ENCODE measurements at regions of chr5 and their contacts with region 1.

Region 1: DNA sequence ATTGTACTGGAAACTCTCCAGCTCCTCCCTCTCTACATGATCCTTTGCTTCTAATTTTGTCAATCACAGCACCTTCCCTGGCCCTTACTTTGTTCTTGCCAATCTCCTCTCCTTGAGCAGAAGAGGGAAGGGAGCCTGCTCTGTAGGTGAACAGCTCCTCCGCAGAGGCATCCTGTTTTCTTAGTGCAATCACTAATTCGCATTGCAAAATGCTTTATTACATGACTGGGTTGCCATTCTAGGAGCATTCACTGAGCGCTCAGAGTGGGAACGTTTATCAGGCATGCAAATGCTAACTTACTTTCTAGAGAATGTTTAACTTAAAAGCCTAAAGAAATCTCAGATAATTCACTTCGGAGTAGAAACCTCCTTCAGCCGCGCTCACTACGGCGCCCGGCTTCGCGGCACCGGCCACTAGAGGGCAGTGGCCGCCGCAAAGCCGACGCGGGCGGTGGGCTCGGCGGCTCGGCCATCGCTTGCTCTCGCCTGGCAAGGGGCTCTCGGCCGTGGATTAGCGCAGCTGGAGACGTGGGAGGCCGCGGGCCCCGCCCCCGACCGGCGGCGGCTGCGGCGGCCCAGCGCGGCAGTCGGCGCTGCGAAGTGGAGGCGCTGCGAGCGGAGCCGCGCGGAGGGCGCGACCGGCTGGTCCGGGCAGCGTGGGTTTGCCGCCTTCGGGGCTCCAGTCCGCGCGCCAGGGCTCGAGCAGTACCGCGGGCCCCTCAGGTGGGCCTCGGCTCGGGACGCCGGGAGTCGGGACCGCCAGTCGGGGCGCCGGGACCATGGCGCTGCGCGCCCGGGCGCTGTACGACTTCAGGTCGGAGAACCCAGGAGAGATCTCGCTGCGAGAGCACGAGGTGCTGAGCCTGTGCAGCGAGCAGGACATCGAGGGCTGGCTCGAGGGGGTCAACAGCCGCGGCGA is at the start of gene SNX18:
- DNase-seq: peak; percentile 37
- H3K4me3 ChIP-seq: peak within 1 kb of the TSS; percentile 65
- H3K27me3 ChIP-seq: no peaks in the 10 kb centered on the region
- CTCF ChIP-seq: peak; percentile 75
- polyA plus RNA-seq, gene SNX18: 33.3 and 47.0 TPM in 2 replicates

Region 2: DNA sequence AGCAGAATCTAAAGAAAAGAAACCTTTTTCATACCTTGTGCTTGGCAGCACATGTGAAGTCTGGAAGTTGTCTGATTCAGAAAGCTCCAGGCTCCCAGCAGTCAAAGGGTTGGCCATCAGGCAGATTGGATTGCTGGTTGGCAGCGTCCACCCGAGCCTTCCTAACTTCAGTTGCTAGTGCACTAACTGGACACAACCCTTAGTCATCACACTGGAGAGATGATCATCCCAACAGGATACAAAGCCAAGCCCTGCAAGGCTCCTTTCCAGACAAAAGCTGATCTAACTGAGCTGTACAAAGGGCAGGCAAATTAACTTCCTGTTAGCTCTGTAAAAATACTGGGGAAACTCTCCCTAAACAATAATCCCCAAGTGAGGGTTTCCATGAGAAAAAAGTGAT is 185.7 kb after region 1 on chr5:
- CTCF ChIA-PET with region 1: interaction called, 11 read pairs
- POLR2A ChIA-PET with region 1: no interaction called
- DNase-seq: peak; percentile 55
- H3K4me3 ChIP-seq: no peak overlapping the region
- H3K27me3 ChIP-seq: no peaks in the 10 kb centered on the region
- CTCF ChIP-seq: no peak

Region 3: DNA sequence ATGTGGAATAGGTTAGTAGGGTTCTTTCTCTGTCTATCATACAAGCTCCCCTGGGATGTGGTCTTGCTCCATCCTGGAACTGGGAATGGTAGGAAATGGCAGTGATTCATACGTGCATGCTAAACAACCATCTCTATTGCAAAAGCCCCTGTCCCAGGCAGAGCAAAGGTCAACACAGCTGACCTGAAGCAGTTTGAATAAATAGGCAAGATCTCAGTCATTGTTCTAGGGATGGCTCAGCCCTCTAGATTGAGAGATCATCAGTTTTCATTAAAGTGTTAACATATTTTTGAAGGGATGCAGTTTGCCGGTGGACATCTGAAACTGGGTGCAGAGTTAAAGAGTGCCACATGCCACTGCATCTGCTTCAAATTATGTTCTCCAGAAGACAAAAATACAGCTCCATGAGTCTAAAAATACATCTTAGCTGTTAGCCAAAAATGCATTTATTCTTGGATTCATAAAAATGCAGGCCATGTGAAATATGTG is 243.8 kb after region 1 on chr5:
- CTCF ChIA-PET with region 1: interaction called, 18 read pairs
- POLR2A ChIA-PET with region 1: no interaction called
- DNase-seq: peak; percentile 93
- H3K4me3 ChIP-seq: no peak overlapping the region
- H3K27me3 ChIP-seq: no peaks in the 10 kb centered on the region
- CTCF ChIP-seq: no peak

Region 4: DNA sequence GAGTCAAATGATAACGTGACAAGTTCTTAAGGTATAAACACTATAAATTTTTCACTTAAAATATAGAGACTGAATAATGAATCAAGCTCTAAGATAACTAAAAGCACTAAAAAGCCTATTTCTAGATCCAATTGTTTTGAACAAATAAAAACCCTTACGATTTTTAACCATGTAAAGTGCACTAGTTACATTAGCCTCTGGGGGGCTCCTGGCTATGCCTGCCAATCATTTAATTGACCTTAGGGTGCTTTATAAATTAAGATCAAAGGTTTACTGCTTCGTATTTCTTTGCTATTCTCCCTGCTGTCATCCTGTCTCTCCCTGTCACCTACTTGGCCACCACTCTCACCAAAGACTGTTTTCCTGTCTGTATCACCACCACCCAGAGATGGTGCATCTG is 334.6 kb after region 1 on chr5:
- CTCF ChIA-PET with region 1: interaction called, 30 read pairs
- POLR2A ChIA-PET with region 1: no interaction called
- DNase-seq: no peak
- H3K4me3 ChIP-seq: no peak overlapping the region
- H3K27me3 ChIP-seq: no peaks in the 10 kb centered on the region
- CTCF ChIP-seq: no peak

Region 5: DNA sequence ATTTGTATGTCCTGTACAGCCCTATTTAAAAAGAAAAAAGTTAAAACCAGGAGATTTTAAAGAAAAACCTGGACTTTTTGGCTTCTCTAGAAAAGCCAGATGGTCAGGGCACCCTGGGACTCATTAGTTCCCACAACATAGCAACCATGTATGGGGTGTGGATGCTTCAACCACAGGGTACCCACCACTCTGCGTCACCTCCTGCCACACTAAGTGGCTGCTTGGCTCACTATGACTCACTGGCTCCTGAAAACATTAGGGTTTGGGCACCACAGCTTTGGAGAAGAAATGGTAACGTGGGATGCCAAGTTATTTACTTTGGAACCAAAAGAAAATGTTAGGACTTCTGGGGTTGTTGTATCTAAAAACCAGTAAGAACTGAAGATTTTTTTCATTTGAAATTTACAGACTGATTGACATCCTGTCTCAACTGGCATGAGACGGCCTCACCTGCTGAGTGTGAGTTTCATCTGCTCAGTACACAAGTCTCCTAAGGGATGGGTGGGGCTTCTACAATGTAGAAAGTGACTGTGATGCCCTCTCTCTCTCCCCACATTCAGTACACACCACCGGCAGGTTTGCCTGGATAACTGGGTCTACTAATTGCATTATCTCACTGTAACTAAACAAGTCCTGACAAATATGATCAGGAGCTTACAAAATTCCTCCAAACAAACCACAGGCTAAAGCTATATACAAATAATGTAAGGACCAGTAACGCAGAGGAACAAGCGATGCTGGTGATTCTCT is 364.0 kb after region 1 on chr5:
- CTCF ChIA-PET with region 1: interaction called, 23 read pairs
- POLR2A ChIA-PET with region 1: no interaction called
- DNase-seq: no peak
- H3K4me3 ChIP-seq: no peak overlapping the region
- H3K27me3 ChIP-seq: peaks cover 3% of the 10 kb centered on the region; the same call in 1 of the 2 replicates
- CTCF ChIP-seq: no peak

Region 6: GRCh38 chr5:54905943-54906537 is 388.6 kb after region 1 on chr5:
- CTCF ChIA-PET with region 1: interaction called, 25 read pairs
- POLR2A ChIA-PET with region 1: no interaction called
- DNase-seq: peak; percentile 31
- H3K4me3 ChIP-seq: no peak overlapping the region
- H3K27me3 ChIP-seq: no peaks in the 10 kb centered on the region
- CTCF ChIP-seq: peak; percentile 77

Region 7: GRCh38 chr5:56301041-56301440 is 1783.6 kb after region 1 on chr5:
- CTCF ChIA-PET with region 1: no interaction called
- POLR2A ChIA-PET with region 1: no interaction called
- DNase-seq: no peak
- H3K4me3 ChIP-seq: no peak overlapping the region
- H3K27me3 ChIP-seq: no peaks in the 10 kb centered on the region
- CTCF ChIP-seq: no peak